CD14-positive monocyte (primary cell): ENCODE measurements at regions of chr16 and their contacts with region 1.

Region 1: GRCh38 chr16:31458844-31459721 is at the start of gene ARMC5:
- DNase-seq: peak; percentile 99
- H3K4me3 ChIP-seq: peak within 1 kb of the TSS; percentile 54 to 86 (median 86)
- H3K4me3 Mint-ChIP-seq: peak within 1 kb of the TSS; percentile 86 to 92
- H3K27ac ChIP-seq: peak within 1 kb of the TSS; percentile 95 to 96
- H3K27ac Mint-ChIP-seq: peak within 1 kb of the TSS; percentile 94 to 97 (median 95)
- H3K4me1 ChIP-seq: peaks cover 56 to 60% of the 10 kb centered on the region in 2 donors
- H3K4me1 Mint-ChIP-seq: peaks cover 53% of the 10 kb centered on the region
- H3K27me3 ChIP-seq: no peaks in the 10 kb centered on the region
- H3K27me3 Mint-ChIP-seq: peaks cover 0 to 6% (median 0%) of the 10 kb centered on the region in 3 donors
- CTCF ChIP-seq: peak; percentile 68
- polyA plus RNA-seq, gene ARMC5: 2.9 to 9.3 (median 4.2) TPM

Region 2: GRCh38 chr16:31868691-31869167 is 409.6 kb after region 1 on chr16:
- intact Hi-C with region 1: loop called (anchors 5 kb)
- DNase-seq: peak; percentile 78 to 82 (median 82)
- H3K4me3 ChIP-seq: peak overlapping the region; percentile 10 to 74 (median 48)
- H3K4me3 Mint-ChIP-seq: peak overlapping the region; percentile 64 to 75
- H3K27ac ChIP-seq: peak overlapping the region; percentile 99 to 100
- H3K27ac Mint-ChIP-seq: peak overlapping the region; percentile 97 to 100 (median 99)
- H3K4me1 ChIP-seq: peaks cover 29 to 49% of the 10 kb centered on the region in 2 donors
- H3K4me1 Mint-ChIP-seq: peaks cover 38% of the 10 kb centered on the region
- H3K27me3 ChIP-seq: no peaks in the 10 kb centered on the region
- H3K27me3 Mint-ChIP-seq: peaks cover 0 to 3% (median 2%) of the 10 kb centered on the region in 3 donors
- CTCF ChIP-seq: peak; percentile 91